Dendritic cell treated with granulocyte-macrophage colony-stimulating factor and Interleukin-4, amounts not matched to agents 40 ng/mL and 50 ng/mL, for 4 days (primary cell): ENCODE measurements at regions of chr2 and their contacts with region 1.

Region 1: GRCh38 chr2:37982147-37982582 is 57.1 kb downstream of the RMDN2 start:
- H3K4me3 Mint-ChIP-seq: no peak overlapping the region
- H3K27ac Mint-ChIP-seq: no peak overlapping the region
- H3K4me1 Mint-ChIP-seq: peaks cover 21% of the 10 kb centered on the region
- H3K27me3 Mint-ChIP-seq: no peaks in the 10 kb centered on the region

Region 2: DNA sequence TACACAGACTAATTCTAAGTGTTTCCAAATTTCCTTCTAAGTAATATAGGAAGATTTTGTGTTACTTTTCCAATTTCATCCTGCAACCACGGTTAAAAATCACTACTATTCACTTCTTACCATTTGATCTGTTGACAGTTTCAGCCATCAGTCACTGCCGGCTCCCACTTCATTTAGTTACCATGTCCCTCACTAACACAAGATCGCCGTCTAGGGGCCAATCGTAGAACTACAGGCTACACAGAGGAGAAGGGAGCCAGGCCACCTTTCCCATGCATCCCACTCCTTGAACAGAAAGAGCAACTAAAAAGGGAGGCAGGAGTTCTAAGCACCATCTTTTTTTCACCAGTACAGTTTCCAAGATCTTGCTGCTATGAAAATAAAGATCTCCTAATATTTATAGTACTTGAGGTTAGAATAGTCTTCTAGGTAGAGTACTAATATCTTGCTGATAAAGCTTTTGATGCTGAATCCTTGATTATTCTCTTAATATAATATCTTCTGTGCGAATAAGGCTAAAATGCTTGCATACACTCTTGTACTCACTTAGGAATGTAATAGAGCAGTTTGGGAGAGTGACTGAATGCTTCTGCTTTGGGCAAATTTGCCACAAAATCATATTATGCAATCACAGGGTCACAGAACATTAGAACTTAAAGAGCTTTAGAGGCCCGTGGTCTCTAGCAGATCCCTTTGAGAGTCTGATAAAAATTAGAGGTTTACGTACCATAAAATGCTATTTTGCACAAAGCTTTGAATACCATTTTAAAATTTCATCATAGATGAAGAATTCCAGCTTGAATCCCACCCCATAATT is 133.3 kb after region 1 on chr2:
- intact Hi-C with region 1: loop called (anchors 1 kb)
- H3K4me3 Mint-ChIP-seq: no peak overlapping the region
- H3K27ac Mint-ChIP-seq: peak overlapping the region; percentile 81
- H3K4me1 Mint-ChIP-seq: peaks cover 81% of the 10 kb centered on the region
- H3K27me3 Mint-ChIP-seq: no peaks in the 10 kb centered on the region